ENCODE measurements at regions of chr1 and their contacts with region 1.

Region 1: DNA sequence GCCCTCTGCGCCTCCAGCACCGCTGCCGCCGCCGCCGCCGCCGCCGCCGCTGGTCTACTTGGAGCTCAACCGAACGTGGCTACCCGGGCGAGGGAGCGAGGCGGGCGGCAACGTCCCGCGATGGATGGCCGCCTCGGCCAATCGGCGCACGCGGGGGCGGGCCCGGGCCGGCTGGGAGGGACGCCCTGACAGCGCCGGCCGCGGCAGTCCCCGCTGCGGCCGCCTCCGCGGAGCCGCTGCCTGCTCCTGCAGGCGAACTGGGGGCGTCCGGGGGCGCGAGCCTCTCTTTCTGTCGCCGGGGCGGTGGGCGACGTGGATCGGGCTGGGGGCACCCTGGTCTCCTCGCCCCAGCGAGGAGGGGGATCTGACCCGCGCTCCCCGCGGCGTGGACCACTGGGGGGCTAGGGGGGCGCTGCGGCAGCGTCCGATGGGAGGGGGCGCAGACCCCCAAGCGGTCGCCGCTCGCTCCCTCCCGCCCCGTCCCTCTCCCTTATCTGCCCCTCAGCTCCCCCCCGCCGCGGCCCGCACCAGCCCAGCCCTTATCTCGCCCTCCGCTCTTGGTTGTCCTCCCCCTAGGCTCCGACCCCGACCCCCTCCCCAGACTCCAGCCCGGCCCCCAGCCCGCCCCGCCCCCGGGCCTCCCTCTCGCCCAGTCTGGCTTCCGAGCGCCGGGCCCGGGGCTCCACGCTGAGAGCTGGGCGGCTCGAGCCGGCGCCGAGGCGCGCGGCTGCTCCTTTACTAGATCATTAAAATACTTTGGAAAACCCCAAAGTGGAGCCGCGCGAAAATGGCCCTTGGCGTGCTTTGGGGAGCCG is at the start of gene SSBP3:
- DNase-seq: peak; percentile 60
- ATAC-seq: peak; percentile 90
- H3K4me3 ChIP-seq: peak within 1 kb of the TSS; percentile 96
- H3K27ac ChIP-seq: peak within 1 kb of the TSS; percentile 84
- H3K4me1 ChIP-seq: peaks cover 38% of the 10 kb centered on the region
- H3K27me3 ChIP-seq: no peaks in the 10 kb centered on the region
- CTCF ChIP-seq: no peak
- EP300 ChIP-seq: no peak
- POLR2A ChIP-seq: peak; percentile 85
- RAD21 ChIP-seq: no peak
- polyA plus RNA-seq, gene SSBP3: 4.1 to 7.9 TPM

Region 2: GRCh38 chr1:54199765-54200518 is 206.6 kb before region 1 on chr1 and contains the starts of genes CYB5RL and MRPL37:
- CTCF ChIA-PET with region 1: no interaction called
- POLR2A ChIA-PET with region 1: interaction called, 8 read pairs
- RAD21 ChIA-PET with region 1: interaction called, 5 read pairs
- SMC1A ChIA-PET with region 1: interaction called, 3 read pairs
- in situ Hi-C with region 1: no loop called
- intact Hi-C with region 1: loop called (anchors 5 kb)
- DNase-seq: peak; percentile 91
- ATAC-seq: peak; percentile 98
- H3K4me3 ChIP-seq: peak within 1 kb of the TSS; percentile 88
- H3K27ac ChIP-seq: peak within 1 kb of the TSS; percentile 68
- H3K4me1 ChIP-seq: 0 out of 2 replicates have a peak, but pooled peaks cover 5% of the 10 kb centered on the region
- H3K27me3 ChIP-seq: no peaks in the 10 kb centered on the region
- CTCF ChIP-seq: no peak
- EP300 ChIP-seq: no peak
- POLR2A ChIP-seq: peak; percentile 95
- RAD21 ChIP-seq: no peak
- polyA plus RNA-seq, gene CYB5RL: 3.1 to 5.0 TPM
- polyA plus RNA-seq, gene MRPL37: 41.4 to 109 TPM

Region 3: GRCh38 chr1:54212872-54213271 is 193.7 kb before region 1 on chr1:
- CTCF ChIA-PET with region 1: no interaction called
- POLR2A ChIA-PET with region 1: no interaction called
- RAD21 ChIA-PET with region 1: no interaction called
- SMC1A ChIA-PET with region 1: no interaction called
- in situ Hi-C with region 1: no loop called
- intact Hi-C with region 1: no loop called
- DNase-seq: no peak
- ATAC-seq: no peak
- H3K4me3 ChIP-seq: no peak overlapping the region
- H3K27ac ChIP-seq: no peak overlapping the region
- H3K4me1 ChIP-seq: no peaks in the 10 kb centered on the region
- H3K27me3 ChIP-seq: no peaks in the 10 kb centered on the region
- CTCF ChIP-seq: no peak
- EP300 ChIP-seq: no peak
- POLR2A ChIP-seq: no peak
- RAD21 ChIP-seq: no peak

Region 4: DNA sequence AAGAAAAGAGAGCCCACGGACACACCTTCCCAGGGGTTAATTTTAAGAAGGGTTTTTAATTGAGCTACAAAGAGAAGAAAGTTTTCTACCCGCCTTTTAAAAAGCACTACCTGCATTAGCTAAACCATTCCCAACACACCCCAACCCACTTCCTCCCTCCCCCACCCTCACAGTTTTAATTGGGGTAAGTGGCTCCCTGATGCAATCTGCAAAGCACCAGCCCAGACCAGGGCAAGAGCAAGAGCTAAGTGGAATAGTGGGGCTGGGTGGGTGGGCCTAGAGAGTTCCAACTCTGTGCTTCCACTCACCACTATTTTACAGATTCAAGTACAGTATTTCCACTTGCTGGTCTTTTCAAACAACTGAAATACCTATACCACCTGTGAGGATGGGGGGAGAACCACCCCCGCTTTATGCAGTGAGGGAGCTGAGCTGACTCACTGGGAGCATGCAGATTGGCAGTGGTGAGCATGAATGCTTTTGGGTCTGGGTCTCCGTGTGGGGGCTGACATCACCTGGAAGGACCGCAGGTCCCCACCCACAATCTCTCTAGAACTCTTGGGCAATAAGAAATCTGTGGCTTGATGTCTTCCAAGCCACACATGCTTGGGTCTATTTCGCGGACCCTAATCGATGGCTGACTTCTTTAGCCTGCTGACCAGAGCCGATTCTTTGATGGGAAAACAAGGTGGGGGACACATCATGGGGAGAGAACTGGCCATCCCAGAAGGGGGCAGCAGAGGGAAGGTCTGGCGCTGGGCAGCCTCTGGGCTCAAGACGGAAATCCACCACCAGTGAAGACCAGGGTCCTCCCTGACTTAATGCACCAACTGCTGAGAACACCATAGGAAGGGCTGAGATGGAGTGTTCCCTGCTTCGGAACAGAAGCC is 95.9 kb before region 1 on chr1:
- CTCF ChIA-PET with region 1: interaction called, 4 read pairs
- POLR2A ChIA-PET with region 1: no interaction called
- RAD21 ChIA-PET with region 1: interaction called, 3 read pairs
- SMC1A ChIA-PET with region 1: interaction called, 4 read pairs
- in situ Hi-C with region 1: no loop called
- intact Hi-C with region 1: loop called (anchors 5 kb)
- DNase-seq: no peak
- ATAC-seq: peak; percentile 74
- H3K4me3 ChIP-seq: no peak overlapping the region
- H3K27ac ChIP-seq: no peak overlapping the region
- H3K4me1 ChIP-seq: no peaks in the 10 kb centered on the region
- H3K27me3 ChIP-seq: no peaks in the 10 kb centered on the region
- CTCF ChIP-seq: peak; percentile 34 to 49 (median 43); a peak in 4 of 6 replicates
- EP300 ChIP-seq: no peak
- POLR2A ChIP-seq: no peak
- RAD21 ChIP-seq: peak; percentile 50

Region 5: GRCh38 chr1:54361342-54361741 is 45.2 kb before region 1 on chr1:
- CTCF ChIA-PET with region 1: interaction called, 6 read pairs
- POLR2A ChIA-PET with region 1: interaction called, 13 read pairs
- RAD21 ChIA-PET with region 1: interaction called, 13 read pairs
- SMC1A ChIA-PET with region 1: interaction called, 9 read pairs
- in situ Hi-C with region 1: no loop called
- intact Hi-C with region 1: loop called (anchors 5 kb)
- DNase-seq: no peak
- ATAC-seq: no peak
- H3K4me3 ChIP-seq: no peak overlapping the region
- H3K27ac ChIP-seq: no peak overlapping the region
- H3K4me1 ChIP-seq: peaks cover 32% of the 10 kb centered on the region
- H3K27me3 ChIP-seq: no peaks in the 10 kb centered on the region
- CTCF ChIP-seq: no peak
- EP300 ChIP-seq: no peak
- POLR2A ChIP-seq: no peak
- RAD21 ChIP-seq: no peak

Region 6: DNA sequence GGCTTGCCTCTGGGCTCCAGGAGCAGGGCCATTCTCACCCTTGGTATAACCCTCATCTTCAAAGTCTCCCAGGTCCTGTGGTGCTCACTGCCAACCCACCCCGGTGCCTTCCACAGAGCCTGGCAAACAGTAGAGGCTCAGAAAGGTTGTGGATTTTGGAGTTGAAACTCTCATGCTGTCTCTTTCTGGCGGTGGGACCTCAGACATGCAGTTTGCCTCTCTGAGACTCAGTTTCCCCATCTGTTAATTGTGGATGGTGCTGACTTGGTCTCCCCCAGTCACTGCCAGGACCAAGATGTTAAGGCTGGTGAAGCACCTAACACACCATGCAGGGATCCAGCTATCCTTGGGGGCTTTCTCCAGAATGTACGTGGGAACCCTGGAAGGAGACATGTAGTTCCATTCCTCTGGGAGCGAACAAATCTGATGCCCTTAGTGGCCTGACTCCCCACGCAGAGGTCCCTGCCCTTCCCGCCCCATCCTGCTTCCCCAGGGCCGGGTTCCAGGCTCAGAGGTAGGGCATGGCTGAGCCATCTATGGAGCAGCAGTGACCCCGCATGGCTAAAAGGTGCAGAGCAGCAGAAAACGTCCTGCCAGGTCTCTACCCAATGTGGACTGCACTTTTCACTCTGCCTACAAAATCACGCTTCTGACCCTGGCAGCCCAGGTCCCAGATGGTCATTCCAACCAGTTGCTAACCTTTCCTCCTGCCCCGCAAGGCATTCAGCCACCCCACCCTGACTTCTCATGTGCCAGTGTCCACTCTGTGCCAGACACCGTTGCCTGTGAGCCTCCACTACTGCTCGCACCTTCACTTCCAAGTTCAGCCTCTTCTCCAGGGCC is 403.8 kb after region 1 on chr1:
- CTCF ChIA-PET with region 1: no interaction called
- POLR2A ChIA-PET with region 1: no interaction called
- RAD21 ChIA-PET with region 1: no interaction called
- SMC1A ChIA-PET with region 1: no interaction called
- in situ Hi-C with region 1: no loop called
- intact Hi-C with region 1: loop called (anchors 5 kb)
- DNase-seq: no peak
- ATAC-seq: peak; percentile 82
- H3K4me3 ChIP-seq: no peak overlapping the region
- H3K27ac ChIP-seq: no peak overlapping the region
- H3K4me1 ChIP-seq: peaks cover 13% of the 10 kb centered on the region
- H3K27me3 ChIP-seq: no peaks in the 10 kb centered on the region
- CTCF ChIP-seq: peak; percentile 91 to 96 (median 91)
- EP300 ChIP-seq: no peak
- POLR2A ChIP-seq: no peak
- RAD21 ChIP-seq: peak; percentile 98